ENCODE measurements at regions of chr5 and their contacts with region 1.

Region 1: DNA sequence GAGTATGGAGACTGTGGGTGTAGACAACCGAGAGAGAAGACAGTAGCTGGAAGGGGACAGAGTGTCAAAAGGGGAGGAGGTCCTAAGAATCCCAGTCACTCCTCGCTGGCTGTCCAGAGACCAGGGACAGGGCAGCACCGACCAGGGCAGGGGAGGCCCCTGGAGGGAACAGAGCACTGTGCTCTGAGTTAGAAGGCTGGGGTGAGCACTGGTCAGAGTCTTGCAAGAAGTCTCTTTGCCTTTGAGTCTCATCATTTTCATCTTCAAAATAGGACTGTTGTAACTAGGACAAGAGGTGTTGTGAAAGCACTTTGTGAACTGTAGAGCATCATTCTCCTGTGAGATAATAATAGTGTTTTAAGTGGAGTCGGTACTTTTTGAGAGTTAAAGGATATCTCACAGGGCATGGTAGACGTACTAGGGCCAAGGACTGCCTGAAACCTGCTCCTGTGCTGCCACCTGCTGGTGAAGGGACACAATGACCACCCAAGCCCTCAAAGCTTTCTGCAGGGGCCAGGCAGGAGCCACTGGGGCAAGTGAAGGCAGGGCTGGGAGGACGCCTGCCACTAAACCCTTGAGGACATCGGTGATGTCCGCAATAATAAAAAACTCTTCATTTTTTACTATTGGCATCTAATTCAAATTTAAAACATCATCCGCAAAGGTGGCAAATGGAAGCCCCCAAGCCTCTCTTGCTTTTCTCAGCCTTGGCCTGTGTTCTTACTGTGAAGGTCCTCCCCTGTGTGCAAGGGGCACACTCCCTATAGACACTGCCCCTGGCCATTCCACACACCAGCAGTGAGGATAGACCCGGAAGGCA is 28.2 kb downstream of the SLC6A7 start:
- DNase-seq: peak; percentile 77
- H3K4me3 ChIP-seq: no peak overlapping the region
- H3K27ac ChIP-seq: no peak overlapping the region
- H3K4me1 ChIP-seq: no peaks in the 10 kb centered on the region
- H3K27me3 ChIP-seq: peaks cover 0 to 8% of the 10 kb centered on the region in 2 experiments
- CTCF ChIP-seq: peak; percentile 81 to 87
- POLR2A ChIP-seq: no peak

Region 2: GRCh38 chr5:149834246-149834855 is 383.7 kb before region 1 on chr5:
- CTCF ChIA-PET with region 1: interaction called, 65 read pairs
- POLR2A ChIA-PET with region 1: no interaction called
- dilution Hi-C with region 1: no loop called
- intact Hi-C with region 1: loop called (anchors 1 kb)
- DNase-seq: peak; percentile 86
- H3K4me3 ChIP-seq: no peak overlapping the region
- H3K27ac ChIP-seq: no peak overlapping the region
- H3K4me1 ChIP-seq: peaks cover 1% of the 10 kb centered on the region
- H3K27me3 ChIP-seq: no peaks in the 10 kb centered on the region
- CTCF ChIP-seq: peak; percentile 79 to 80
- POLR2A ChIP-seq: no peak

Region 3: DNA sequence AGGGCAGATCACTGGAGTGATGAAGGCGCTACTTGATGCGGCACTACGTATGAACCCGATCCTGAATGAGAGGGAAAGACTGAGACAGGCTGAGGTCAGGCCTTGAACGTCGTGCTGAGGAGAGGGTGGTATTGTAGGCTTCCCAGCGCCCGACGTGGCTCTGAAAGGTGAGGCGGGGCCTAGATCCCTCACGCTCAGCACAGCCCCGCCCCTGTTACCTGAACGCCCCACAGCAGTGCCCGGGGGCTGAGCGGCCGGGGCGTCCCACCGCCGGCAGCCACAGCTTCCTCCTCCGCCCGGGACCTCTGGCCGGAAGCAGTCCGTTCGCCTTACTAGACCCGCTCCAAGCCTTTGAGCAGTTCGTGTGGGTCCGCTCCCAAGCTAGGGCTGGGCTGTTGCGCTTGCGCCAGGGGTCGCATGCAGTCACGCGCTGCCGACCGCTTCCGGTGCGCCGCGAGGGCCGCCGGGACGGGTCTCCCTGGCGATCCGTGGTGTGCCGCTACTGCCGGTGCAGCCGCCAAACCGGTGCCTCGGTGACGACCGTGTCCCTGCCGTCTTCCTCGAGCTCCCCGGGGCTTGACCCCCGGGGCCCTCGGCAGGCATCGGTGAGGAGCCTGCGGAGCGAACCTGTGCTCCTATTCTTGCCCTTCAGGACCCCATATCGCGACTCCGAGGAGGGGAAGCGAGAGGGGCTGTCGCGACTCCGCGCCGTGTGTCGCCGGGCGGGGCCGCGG is 217.7 kb before region 1 on chr5 and contains the starts of genes HMGXB3 and TIGD6:
- CTCF ChIA-PET with region 1: no interaction called
- POLR2A ChIA-PET with region 1: no interaction called
- dilution Hi-C with region 1: no loop called
- intact Hi-C with region 1: loop called (anchors 2 kb)
- DNase-seq: peak; percentile 94
- H3K4me3 ChIP-seq: peak within 1 kb of the TSS; percentile 42 to 97 (median 86)
- H3K27ac ChIP-seq: peak within 1 kb of the TSS; percentile 72
- H3K4me1 ChIP-seq: peaks cover 23% of the 10 kb centered on the region
- H3K27me3 ChIP-seq: no peaks in the 10 kb centered on the region
- CTCF ChIP-seq: peak in 1 of 2 donors; percentile 8
- POLR2A ChIP-seq: peak; percentile 96
- total RNA-seq, gene HMGXB3: 43.0 and 52.6 TPM in 2 replicates
- total RNA-seq, gene TIGD6: 3.6 and 4.1 TPM in 2 replicates

Region 4: GRCh38 chr5:150138551-150139265 is 79.4 kb before region 1 on chr5:
- CTCF ChIA-PET with region 1: interaction called, 18 read pairs
- POLR2A ChIA-PET with region 1: no interaction called
- dilution Hi-C with region 1: no loop called
- intact Hi-C with region 1: no loop called
- DNase-seq: peak; percentile 86
- H3K4me3 ChIP-seq: no peak overlapping the region
- H3K27ac ChIP-seq: no peak overlapping the region
- H3K4me1 ChIP-seq: peaks cover 29% of the 10 kb centered on the region
- H3K27me3 ChIP-seq: peaks cover 0 to 6% of the 10 kb centered on the region in 2 experiments
- CTCF ChIP-seq: no peak
- POLR2A ChIP-seq: no peak

Region 5: DNA sequence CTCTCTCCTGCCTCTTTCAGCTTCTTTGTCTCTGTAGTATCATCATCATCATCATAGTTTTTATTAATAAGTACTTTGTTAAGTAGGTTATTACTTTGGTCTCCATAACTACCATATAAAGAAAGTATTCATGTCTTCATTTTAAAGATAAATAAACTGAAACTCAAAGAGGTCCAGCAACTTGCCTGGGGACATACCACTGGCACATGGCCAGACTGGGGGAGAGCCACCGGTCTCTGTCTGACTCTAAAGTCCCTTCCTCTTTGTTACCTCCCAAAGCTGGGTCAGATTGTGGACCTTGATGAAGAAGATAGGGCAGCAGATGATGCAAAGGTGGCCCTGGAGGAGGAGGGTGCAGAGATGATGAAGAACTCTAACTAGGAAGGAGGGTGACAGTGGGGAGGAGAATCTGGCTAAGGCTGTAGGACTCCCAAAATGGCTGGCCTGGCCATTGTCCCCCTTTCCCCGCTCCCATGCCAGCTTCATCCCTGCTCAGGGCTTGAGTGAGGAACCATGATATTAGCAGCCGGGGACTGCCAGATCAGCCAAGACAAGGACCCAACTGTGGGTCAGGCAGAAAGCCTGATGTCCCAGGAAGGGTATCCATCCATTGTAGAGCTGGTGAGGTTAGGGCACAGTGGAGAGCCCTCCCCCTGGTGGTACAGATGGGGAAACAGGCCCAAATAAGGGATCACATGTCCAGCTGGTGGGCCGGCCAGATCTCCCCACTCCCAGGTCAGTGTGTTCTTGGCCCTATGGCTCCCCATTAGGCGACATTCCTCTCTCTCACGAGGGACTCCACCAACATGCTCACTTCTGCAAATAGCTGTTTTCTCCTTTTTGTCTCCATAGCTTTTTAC is 42.8 kb before region 1 on chr5:
- CTCF ChIA-PET with region 1: interaction called, 13 read pairs
- POLR2A ChIA-PET with region 1: no interaction called
- dilution Hi-C with region 1: no loop called
- intact Hi-C with region 1: no loop called
- DNase-seq: peak; percentile 34
- H3K4me3 ChIP-seq: no peak overlapping the region
- H3K27ac ChIP-seq: no peak overlapping the region
- H3K4me1 ChIP-seq: no peaks in the 10 kb centered on the region
- H3K27me3 ChIP-seq: peaks cover 7 to 11% of the 10 kb centered on the region in 2 experiments
- CTCF ChIP-seq: peak; percentile 48 to 77
- POLR2A ChIP-seq: no peak

Region 6: DNA sequence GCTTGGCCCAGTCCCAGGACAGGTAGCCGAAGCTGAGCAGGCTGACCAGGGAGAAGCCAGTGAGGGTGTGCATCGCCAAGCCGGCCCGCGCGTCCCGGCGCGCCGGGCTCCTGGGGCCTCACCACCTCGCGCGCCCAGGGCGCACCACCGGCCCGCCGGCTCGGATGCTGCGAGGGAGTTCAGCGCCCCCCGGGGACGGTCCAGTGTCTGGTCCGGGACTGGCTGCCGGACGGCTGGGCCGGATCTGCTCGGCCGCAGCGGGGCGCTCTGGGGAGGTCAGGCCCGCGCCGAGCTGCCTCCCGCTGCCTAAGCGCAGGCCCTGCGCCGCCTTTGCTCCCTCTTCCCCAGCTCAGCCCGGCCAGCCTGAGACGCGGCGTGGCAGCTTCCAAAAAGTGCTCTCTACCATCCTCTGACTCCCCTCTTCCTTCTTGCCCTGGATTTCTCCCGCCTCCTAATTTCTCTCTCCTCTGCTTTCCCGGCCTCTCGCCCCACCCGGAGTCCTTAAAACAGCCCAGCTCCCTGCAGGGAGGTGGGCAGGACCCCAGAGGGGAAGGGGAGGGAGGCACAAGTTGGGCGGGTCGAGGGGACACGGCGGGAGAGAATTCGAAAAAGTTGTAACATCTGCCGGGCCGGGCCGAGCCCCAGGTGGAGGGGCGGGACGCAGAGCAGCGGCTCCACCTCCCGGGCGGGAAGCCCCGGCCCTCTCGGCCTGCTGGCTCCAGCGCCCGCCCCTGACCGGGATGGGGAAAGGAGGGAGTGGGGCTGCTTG is 84.4 kb after region 1 on chr5 and contains the start of gene ARSI:
- CTCF ChIA-PET with region 1: no interaction called
- POLR2A ChIA-PET with region 1: no interaction called
- dilution Hi-C with region 1: no loop called
- intact Hi-C with region 1: no loop called
- DNase-seq: no peak
- H3K4me3 ChIP-seq: peak within 1 kb of the TSS in 1 of 3 experiments; percentile 2
- H3K27ac ChIP-seq: no peak within 1 kb of the TSS
- H3K4me1 ChIP-seq: no peaks in the 10 kb centered on the region
- H3K27me3 ChIP-seq: peaks cover 38 to 39% of the 10 kb centered on the region in 2 experiments
- CTCF ChIP-seq: peak in 1 of 2 donors; percentile 28
- POLR2A ChIP-seq: no peak
- total RNA-seq, gene ARSI: 0.20 TPM in 1 of 2 replicates, not detected in the other

Region 7: DNA sequence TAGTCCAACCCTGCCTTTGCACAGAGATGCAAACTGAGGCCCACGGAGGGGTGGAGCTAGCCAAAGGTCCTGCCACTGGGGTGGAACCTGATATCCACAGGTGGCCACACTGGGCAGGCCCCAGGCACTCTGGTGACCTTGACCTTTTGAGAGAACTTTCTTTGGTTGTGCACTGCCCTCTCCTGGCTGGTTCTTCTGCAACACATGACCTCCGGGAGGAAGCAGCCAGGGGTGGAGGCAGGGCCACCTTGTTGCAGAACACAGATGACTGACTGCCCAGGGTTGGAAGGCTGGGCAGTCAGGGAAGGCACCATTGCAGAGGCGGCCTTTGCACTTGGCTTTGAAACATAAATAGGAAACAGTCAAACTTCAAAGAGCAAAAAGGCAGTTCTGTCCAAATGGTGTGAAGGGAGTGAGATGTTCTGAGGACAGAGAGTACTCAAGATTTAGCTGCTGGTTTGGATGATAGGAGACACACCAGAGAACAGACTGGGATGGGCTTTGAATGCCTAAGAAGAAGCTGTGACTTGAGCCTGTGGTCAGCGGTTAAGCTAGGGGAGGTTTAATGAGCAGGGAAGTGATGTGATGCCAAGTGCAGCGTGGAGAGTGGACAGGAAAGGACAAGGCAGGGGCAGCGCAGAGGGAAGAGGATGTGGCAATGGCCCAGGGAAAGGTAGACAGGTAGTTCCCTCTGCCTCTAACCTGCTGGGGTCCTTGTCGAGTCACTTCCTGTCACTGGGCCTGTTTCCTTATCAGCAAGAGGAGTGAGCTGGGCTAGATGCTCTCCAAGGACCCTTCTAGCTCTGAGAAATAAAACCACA is 132.7 kb after region 1 on chr5:
- CTCF ChIA-PET with region 1: interaction called, 17 read pairs
- POLR2A ChIA-PET with region 1: no interaction called
- dilution Hi-C with region 1: no loop called
- intact Hi-C with region 1: loop called (anchors 1 kb)
- DNase-seq: peak; percentile 49
- H3K4me3 ChIP-seq: no peak overlapping the region
- H3K27ac ChIP-seq: no peak overlapping the region
- H3K4me1 ChIP-seq: no peaks in the 10 kb centered on the region
- H3K27me3 ChIP-seq: no peaks in the 10 kb centered on the region
- CTCF ChIP-seq: peak; percentile 51 to 56
- POLR2A ChIP-seq: no peak